ENCODE measurements at regions of chr20 and their contacts with region 1.

Region 1: GRCh38 chr20:9609887-9610502 is 95.6 kb downstream of the LAMP5 start:
- DNase-seq: peak; percentile 71
- ATAC-seq: peak; percentile 85
- H3K4me3 ChIP-seq: no peak overlapping the region
- H3K27ac ChIP-seq: no peak overlapping the region
- H3K4me1 ChIP-seq: no peaks in the 10 kb centered on the region
- H3K27me3 ChIP-seq: peaks cover 8% of the 10 kb centered on the region
- CTCF ChIP-seq: peak; percentile 72
- POLR2A ChIP-seq: no peak
- RAD21 ChIP-seq: peak; percentile 66

Region 2: DNA sequence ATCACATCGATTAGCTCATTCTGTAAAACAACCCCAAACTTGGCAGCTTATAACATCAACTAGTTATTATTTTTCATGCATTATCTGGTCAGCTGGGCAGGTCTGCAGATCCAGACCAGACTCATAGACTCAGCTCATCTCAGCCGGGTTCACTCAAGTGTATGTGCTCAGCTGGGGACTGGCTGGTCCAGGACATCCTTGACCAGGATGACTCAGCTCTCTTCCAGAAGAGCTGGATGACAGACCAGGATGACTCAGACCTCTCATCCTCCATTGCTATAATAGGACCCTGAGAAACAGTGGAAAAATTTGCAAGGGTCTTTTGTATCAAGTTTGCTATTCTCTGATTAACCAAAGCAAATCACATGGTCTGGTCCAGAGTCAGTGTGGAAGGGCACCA is 853.6 kb before region 1 on chr20:
- CTCF ChIA-PET with region 1: no interaction called
- POLR2A ChIA-PET with region 1: no interaction called
- dilution Hi-C with region 1: no loop called
- in situ Hi-C with region 1: loop called (anchors 10 kb)
- intact Hi-C with region 1: loop called (anchors 5 kb)
- DNase-seq: peak; percentile 96
- ATAC-seq: peak; percentile 82
- H3K4me3 ChIP-seq: no peak overlapping the region
- H3K27ac ChIP-seq: no peak overlapping the region
- H3K4me1 ChIP-seq: peaks cover 11% of the 10 kb centered on the region
- H3K27me3 ChIP-seq: no peaks in the 10 kb centered on the region
- CTCF ChIP-seq: no peak
- POLR2A ChIP-seq: no peak
- RAD21 ChIP-seq: no peak

Region 3: DNA sequence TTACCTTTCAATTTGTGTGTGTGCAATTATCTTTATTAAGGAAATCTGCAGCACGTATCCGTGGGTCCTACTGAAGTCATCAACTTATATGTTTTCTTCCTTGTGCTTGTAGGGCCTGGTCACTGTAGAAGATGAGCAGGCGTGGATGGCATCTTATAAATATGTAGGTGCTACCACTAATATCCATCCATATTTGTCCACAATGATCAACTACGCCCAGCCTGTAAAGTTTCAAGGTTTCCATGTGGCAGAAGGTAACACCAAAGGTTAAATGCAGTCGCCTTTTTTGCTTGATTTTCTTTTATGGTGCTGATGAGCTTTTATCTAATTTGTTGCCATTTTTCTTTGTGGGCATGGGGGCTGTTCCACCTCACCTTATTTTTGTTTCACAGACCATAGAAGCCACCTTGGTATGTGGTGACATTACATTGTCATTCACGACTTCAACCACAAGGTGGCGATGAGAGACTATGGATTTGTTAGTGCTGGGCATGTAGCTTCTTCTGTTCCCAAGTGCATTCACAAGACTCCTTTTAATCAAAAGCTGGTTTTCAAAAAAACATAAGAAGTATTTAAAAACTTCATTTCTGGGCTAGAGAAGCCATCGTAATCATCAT is 202.1 kb before region 1 on chr20:
- CTCF ChIA-PET with region 1: interaction called, 24 read pairs
- POLR2A ChIA-PET with region 1: no interaction called
- dilution Hi-C with region 1: no loop called
- in situ Hi-C with region 1: loop called (anchors 5 kb)
- intact Hi-C with region 1: loop called (anchors 1 kb)
- DNase-seq: peak; percentile 78
- ATAC-seq: peak; percentile 85
- H3K4me3 ChIP-seq: no peak overlapping the region
- H3K27ac ChIP-seq: no peak overlapping the region
- H3K4me1 ChIP-seq: peaks cover 8% of the 10 kb centered on the region
- H3K27me3 ChIP-seq: no peaks in the 10 kb centered on the region
- CTCF ChIP-seq: peak; percentile 89
- POLR2A ChIP-seq: 0 out of 2 replicates have a peak, but pooled peaks have one; percentile 21
- RAD21 ChIP-seq: peak; percentile 91

Region 4: DNA sequence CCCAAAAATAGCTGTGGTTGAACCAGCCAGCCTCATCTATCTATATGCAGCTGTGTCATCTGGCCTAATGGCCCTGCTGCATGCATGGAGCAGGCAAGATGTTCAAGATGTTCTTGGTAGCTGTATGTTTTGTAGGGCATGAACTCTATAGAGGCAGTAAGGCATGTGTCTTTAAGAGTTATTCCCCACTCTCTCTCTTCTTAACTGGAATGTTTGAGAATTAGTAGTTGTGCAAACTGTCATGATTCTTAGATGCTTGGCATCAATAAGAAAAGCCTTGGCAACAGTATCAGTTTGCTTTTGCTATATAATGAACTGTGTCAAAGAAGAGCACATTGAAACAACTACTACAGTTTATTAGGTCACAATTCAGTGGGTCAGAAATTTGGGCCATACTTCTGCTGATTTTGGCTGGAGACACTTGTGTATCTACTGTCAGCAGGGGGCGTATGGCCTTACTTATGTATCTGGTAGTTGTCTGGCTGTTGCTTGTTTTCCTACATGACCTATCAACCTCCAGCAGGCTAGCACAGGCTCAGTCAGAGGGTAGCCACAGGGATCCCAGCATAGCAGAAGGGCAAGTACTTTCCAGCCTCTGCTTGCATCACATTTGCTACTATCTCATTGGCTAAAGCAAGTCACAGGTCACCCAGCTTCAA is 151.7 kb before region 1 on chr20:
- CTCF ChIA-PET with region 1: interaction called, 4 read pairs
- POLR2A ChIA-PET with region 1: no interaction called
- dilution Hi-C with region 1: no loop called
- in situ Hi-C with region 1: no loop called
- intact Hi-C with region 1: loop called (anchors 2 kb)
- DNase-seq: peak; percentile 20
- ATAC-seq: peak; percentile 56
- H3K4me3 ChIP-seq: no peak overlapping the region
- H3K27ac ChIP-seq: no peak overlapping the region
- H3K4me1 ChIP-seq: peaks cover 4% of the 10 kb centered on the region
- H3K27me3 ChIP-seq: no peaks in the 10 kb centered on the region
- CTCF ChIP-seq: peak; percentile 19; the same call in 1 of the 2 replicates
- POLR2A ChIP-seq: no peak
- RAD21 ChIP-seq: no peak

Region 5: DNA sequence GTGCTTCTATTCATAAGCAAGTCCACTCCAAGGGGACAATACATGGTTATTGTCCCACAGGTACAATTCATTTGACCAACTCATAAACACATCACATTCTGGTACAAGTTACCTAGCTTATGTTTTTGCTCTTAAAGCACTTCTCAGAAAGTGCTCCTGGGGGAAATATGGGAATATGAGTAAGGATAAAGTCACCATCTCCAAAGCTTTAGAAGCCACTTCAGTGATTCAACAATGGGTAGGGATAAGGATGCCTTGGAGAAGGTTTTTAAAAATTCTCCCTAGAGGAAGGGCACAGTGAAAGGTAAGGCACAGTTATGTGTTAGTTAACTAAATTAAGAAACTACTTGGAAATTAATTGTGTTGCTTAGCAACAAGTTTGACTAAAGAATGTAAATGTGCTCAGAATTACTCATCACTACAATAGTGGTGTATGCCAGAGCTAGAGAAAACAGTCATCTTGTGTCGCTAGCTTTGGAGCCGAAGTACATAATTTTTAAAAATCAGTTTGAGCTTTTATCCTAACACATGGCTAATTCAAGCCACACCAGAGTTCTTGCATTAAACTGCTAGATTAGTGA is 135.1 kb before region 1 on chr20:
- CTCF ChIA-PET with region 1: interaction called, 3 read pairs
- POLR2A ChIA-PET with region 1: interaction called, 3 read pairs
- dilution Hi-C with region 1: no loop called
- in situ Hi-C with region 1: no loop called
- intact Hi-C with region 1: loop called (anchors 5 kb)
- DNase-seq: peak; percentile 53
- ATAC-seq: peak; percentile 75
- H3K4me3 ChIP-seq: no peak overlapping the region
- H3K27ac ChIP-seq: no peak overlapping the region
- H3K4me1 ChIP-seq: no peaks in the 10 kb centered on the region
- H3K27me3 ChIP-seq: no peaks in the 10 kb centered on the region
- CTCF ChIP-seq: no peak
- POLR2A ChIP-seq: no peak
- RAD21 ChIP-seq: no peak

Region 6: DNA sequence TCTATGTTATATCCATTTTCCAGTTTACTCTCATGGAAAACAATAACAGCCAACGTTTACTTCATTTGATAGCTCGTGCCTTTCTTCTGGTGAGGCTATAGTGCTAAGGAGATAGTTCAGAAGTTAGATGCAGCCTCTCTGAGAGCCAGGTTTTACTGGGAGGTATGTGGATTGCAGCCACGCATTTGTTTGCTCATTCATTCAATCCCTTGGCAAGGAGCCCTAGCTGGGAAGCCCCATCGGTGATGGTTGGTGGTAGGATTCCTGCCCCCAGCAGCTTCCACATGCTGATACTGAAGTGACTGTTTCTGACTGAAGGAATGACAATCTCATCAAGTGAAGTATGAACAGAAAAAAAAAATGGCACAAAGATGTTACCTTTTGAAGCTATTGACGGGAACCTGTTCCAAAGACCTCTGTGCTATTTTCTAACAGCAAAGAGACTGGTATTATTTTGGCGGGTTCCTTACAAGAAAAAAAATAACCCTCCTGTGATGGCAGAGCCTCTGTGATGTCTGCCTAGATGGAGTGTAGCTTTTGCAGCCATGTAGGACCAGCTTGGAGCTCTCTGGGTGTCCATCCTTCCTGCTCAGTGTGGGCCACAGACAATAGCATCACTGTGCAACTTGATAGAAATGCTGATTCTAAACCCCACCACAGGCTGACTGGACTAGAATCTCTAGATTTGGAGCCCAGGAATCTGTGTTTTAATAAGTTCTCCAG is 639.2 kb after region 1 on chr20:
- CTCF ChIA-PET with region 1: no interaction called
- POLR2A ChIA-PET with region 1: no interaction called
- dilution Hi-C with region 1: no loop called
- in situ Hi-C with region 1: no loop called
- intact Hi-C with region 1: no loop called
- DNase-seq: peak; percentile 44
- ATAC-seq: peak; percentile 53
- H3K4me3 ChIP-seq: no peak overlapping the region
- H3K27ac ChIP-seq: no peak overlapping the region
- H3K4me1 ChIP-seq: peaks cover 1% of the 10 kb centered on the region; the same call in 1 of the 2 replicates
- H3K27me3 ChIP-seq: no peaks in the 10 kb centered on the region
- CTCF ChIP-seq: no peak
- POLR2A ChIP-seq: no peak
- RAD21 ChIP-seq: no peak

Measured in IMR-90 (cell line).